B cell (primary cell): ENCODE measurements at regions of chr5 and their contacts with region 1.

Region 1: DNA sequence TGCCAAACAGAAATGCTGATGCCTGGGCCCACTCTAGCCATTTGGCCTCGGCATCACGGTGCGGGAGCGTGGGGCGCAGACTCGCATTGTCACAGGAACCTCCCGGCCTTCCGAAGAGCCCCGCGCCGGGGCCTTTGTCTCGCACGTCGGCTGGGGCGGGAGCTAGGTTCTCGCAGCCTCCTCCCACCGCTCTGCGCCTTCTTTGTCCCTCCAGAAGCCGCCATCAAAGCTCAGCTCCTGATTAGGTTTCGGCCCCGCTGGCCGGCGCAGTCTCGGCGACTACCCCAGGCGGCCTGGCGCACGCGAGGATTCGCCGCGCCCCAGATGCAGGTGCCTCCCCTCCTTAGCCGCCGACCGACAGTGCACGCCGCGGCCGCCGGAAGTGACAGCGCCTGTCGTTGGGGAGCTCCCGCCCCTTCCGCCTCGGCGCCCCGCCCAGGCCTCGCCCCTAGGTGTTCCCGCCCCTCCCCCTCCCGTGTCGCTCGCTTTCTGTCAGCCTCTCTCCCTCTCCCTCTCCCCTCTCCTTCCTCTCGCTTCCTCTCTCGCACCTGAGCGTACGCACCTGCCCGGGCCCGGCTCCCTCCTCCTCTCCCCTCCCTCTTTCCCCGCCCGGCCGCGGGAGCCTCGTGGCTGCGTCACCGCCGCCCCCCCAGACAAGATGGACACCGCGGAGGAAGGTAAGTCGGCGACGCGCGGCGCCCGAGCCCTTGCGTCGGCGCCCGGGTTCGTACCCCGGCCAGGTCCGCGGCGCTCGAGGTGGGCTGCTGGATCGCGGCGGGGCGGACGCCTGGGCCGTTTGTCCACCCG is at the start of gene MARCHF6:
- DNase-seq: peak; percentile 97
- ATAC-seq: peak; percentile 82
- H3K4me3 ChIP-seq: peak within 1 kb of the TSS; percentile 64 to 96 (median 90)
- H3K4me3 Mint-ChIP-seq: peak within 1 kb of the TSS; percentile 94
- H3K27ac ChIP-seq: peak within 1 kb of the TSS; percentile 97 to 98
- H3K27ac Mint-ChIP-seq: peak within 1 kb of the TSS; percentile 96
- H3K4me1 ChIP-seq: peaks cover 30 to 33% of the 10 kb centered on the region in 2 donors
- H3K4me1 Mint-ChIP-seq: peaks cover 39% of the 10 kb centered on the region
- H3K27me3 ChIP-seq: no peaks in the 10 kb centered on the region
- H3K27me3 Mint-ChIP-seq: no peaks in the 10 kb centered on the region
- CTCF ChIP-seq: no peak
- total RNA-seq, gene MARCHF6: 199 and 201 TPM in 2 replicates

Region 2: GRCh38 chr5:10249948-10250803 is 103.3 kb before region 1 on chr5 and contains the start of gene CCT5:
- CTCF ChIA-PET with region 1: no interaction called
- POLR2A ChIA-PET with region 1: interaction called, 17 read pairs
- intact Hi-C with region 1: loop called (anchors 1 kb)
- DNase-seq: peak; percentile 98
- ATAC-seq: peak; percentile 82
- H3K4me3 ChIP-seq: peak within 1 kb of the TSS; percentile 79 to 98 (median 87)
- H3K4me3 Mint-ChIP-seq: peak within 1 kb of the TSS; percentile 99
- H3K27ac ChIP-seq: peak within 1 kb of the TSS; percentile 92 to 100
- H3K27ac Mint-ChIP-seq: peak within 1 kb of the TSS; percentile 100
- H3K4me1 ChIP-seq: peaks cover 27 to 29% of the 10 kb centered on the region in 2 donors
- H3K4me1 Mint-ChIP-seq: peaks cover 42% of the 10 kb centered on the region
- H3K27me3 ChIP-seq: no peaks in the 10 kb centered on the region
- H3K27me3 Mint-ChIP-seq: no peaks in the 10 kb centered on the region
- CTCF ChIP-seq: no peak
- total RNA-seq, gene CCT5: 74.3 and 95.7 TPM in 2 replicates

Region 3: GRCh38 chr5:10283927-10284635 is 69.4 kb before region 1 on chr5:
- CTCF ChIA-PET with region 1: interaction called, 9 read pairs
- POLR2A ChIA-PET with region 1: no interaction called
- intact Hi-C with region 1: loop called (anchors 2 kb)
- DNase-seq: peak; percentile 81
- ATAC-seq: peak; percentile 97
- H3K4me3 ChIP-seq: no peak overlapping the region
- H3K4me3 Mint-ChIP-seq: no peak overlapping the region
- H3K27ac ChIP-seq: no peak overlapping the region
- H3K27ac Mint-ChIP-seq: no peak overlapping the region
- H3K4me1 ChIP-seq: peaks cover 4 to 15% of the 10 kb centered on the region in 2 donors
- H3K4me1 Mint-ChIP-seq: peaks cover 12% of the 10 kb centered on the region
- H3K27me3 ChIP-seq: peaks cover 0 to 3% (median 0%) of the 10 kb centered on the region in 4 experiments
- H3K27me3 Mint-ChIP-seq: peaks cover 12% of the 10 kb centered on the region
- CTCF ChIP-seq: peak; percentile 98

Region 4: DNA sequence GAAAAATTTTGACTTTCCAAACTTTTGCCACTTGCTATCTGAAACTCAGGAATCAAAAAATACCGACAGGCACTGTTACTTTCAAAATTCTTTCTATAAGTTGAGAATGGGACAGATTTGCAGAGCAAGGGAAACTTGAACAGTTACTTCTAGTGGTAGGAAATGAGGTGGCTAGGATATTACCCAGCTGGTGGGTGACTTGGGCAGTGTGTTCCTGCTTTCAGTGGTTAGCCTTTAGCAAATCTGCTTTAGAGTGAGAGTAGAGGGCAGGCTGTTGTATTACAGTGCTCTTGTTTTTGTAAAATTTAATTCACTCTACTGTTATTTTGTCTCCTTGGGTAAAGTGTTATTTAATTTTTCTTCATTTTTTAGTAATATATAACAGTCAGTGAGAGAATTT is 48.1 kb after region 1 on chr5:
- CTCF ChIA-PET with region 1: no interaction called
- POLR2A ChIA-PET with region 1: no interaction called
- intact Hi-C with region 1: loop called (anchors 5 kb)
- DNase-seq: no peak
- ATAC-seq: no peak
- H3K4me3 ChIP-seq: no peak overlapping the region
- H3K4me3 Mint-ChIP-seq: no peak overlapping the region
- H3K27ac ChIP-seq: no peak overlapping the region
- H3K27ac Mint-ChIP-seq: no peak overlapping the region
- H3K4me1 ChIP-seq: no peaks in the 10 kb centered on the region
- H3K4me1 Mint-ChIP-seq: no peaks in the 10 kb centered on the region
- H3K27me3 ChIP-seq: no peaks in the 10 kb centered on the region
- H3K27me3 Mint-ChIP-seq: no peaks in the 10 kb centered on the region
- CTCF ChIP-seq: no peak

Region 5: GRCh38 chr5:10441083-10441991 is 87.9 kb after region 1 on chr5 and contains the start of gene ROPN1L:
- CTCF ChIA-PET with region 1: no interaction called
- POLR2A ChIA-PET with region 1: no interaction called
- intact Hi-C with region 1: loop called (anchors 2 kb)
- DNase-seq: peak; percentile 86
- ATAC-seq: peak; percentile 95
- H3K4me3 ChIP-seq: peak within 1 kb of the TSS; percentile 66 to 85 (median 70)
- H3K4me3 Mint-ChIP-seq: peak within 1 kb of the TSS; percentile 93
- H3K27ac ChIP-seq: no peak within 1 kb of the TSS
- H3K27ac Mint-ChIP-seq: peak within 1 kb of the TSS; percentile 59
- H3K4me1 ChIP-seq: peaks cover 27 to 41% of the 10 kb centered on the region in 2 donors
- H3K4me1 Mint-ChIP-seq: peaks cover 35% of the 10 kb centered on the region
- H3K27me3 ChIP-seq: peaks cover 0 to 5% (median 0%) of the 10 kb centered on the region in 4 experiments
- H3K27me3 Mint-ChIP-seq: peaks cover 4% of the 10 kb centered on the region
- CTCF ChIP-seq: no peak
- total RNA-seq, gene ROPN1L: 0.34 and 0.91 TPM in 2 replicates

Region 6: GRCh38 chr5:10577371-10578292 is 224.2 kb after region 1 on chr5:
- CTCF ChIA-PET with region 1: interaction called, 3 read pairs
- POLR2A ChIA-PET with region 1: interaction called, 4 read pairs
- intact Hi-C with region 1: loop called (anchors 1 kb)
- DNase-seq: peak; percentile 12
- ATAC-seq: no peak
- H3K4me3 ChIP-seq: no peak overlapping the region
- H3K4me3 Mint-ChIP-seq: peak overlapping the region; percentile 52
- H3K27ac ChIP-seq: no peak overlapping the region
- H3K27ac Mint-ChIP-seq: peak overlapping the region; percentile 64
- H3K4me1 ChIP-seq: peaks cover 59 to 60% of the 10 kb centered on the region in 2 donors
- H3K4me1 Mint-ChIP-seq: peaks cover 81% of the 10 kb centered on the region
- H3K27me3 ChIP-seq: no peaks in the 10 kb centered on the region
- H3K27me3 Mint-ChIP-seq: no peaks in the 10 kb centered on the region
- CTCF ChIP-seq: no peak

Region 7: GRCh38 chr5:10761166-10761932 is 407.9 kb after region 1 on chr5 and contains the start of gene DAP:
- CTCF ChIA-PET with region 1: no interaction called
- POLR2A ChIA-PET with region 1: no interaction called
- intact Hi-C with region 1: loop called (anchors 1 kb)
- DNase-seq: peak; percentile 96
- ATAC-seq: peak; percentile 81
- H3K4me3 ChIP-seq: peak within 1 kb of the TSS; percentile 53 to 76 (median 68)
- H3K4me3 Mint-ChIP-seq: peak within 1 kb of the TSS; percentile 94
- H3K27ac ChIP-seq: peak within 1 kb of the TSS; percentile 92 to 93
- H3K27ac Mint-ChIP-seq: peak within 1 kb of the TSS; percentile 97
- H3K4me1 ChIP-seq: peaks cover 26 to 47% of the 10 kb centered on the region in 2 donors
- H3K4me1 Mint-ChIP-seq: peaks cover 51% of the 10 kb centered on the region
- H3K27me3 ChIP-seq: no peaks in the 10 kb centered on the region
- H3K27me3 Mint-ChIP-seq: no peaks in the 10 kb centered on the region
- CTCF ChIP-seq: no peak
- total RNA-seq, gene DAP: 49.2 and 49.8 TPM in 2 replicates